CD14-positive monocyte (primary cell): ENCODE measurements at regions of chr14 and their contacts with region 1.

Region 1: GRCh38 chr14:103546652-103547454 is 15.6 kb downstream of the BAG5 start:
- DNase-seq: peak; percentile 44 to 60 (median 56)
- H3K4me3 ChIP-seq: no peak overlapping the region
- H3K4me3 Mint-ChIP-seq: no peak overlapping the region
- H3K27ac ChIP-seq: no peak overlapping the region
- H3K27ac Mint-ChIP-seq: no peak overlapping the region
- H3K4me1 ChIP-seq: no peaks in the 10 kb centered on the region
- H3K4me1 Mint-ChIP-seq: no peaks in the 10 kb centered on the region
- H3K27me3 ChIP-seq: no peaks in the 10 kb centered on the region
- H3K27me3 Mint-ChIP-seq: peaks cover 2 to 6% (median 2%) of the 10 kb centered on the region in 3 donors
- CTCF ChIP-seq: peak; percentile 99

Region 2: GRCh38 chr14:103500148-103500990 is 46.5 kb before region 1 on chr14:
- intact Hi-C with region 1: loop called (anchors 2 to 5 kb)
- DNase-seq: peak; percentile 41 to 68 (median 66)
- H3K4me3 ChIP-seq: no peak overlapping the region
- H3K4me3 Mint-ChIP-seq: no peak overlapping the region
- H3K27ac ChIP-seq: no peak overlapping the region
- H3K27ac Mint-ChIP-seq: no peak overlapping the region
- H3K4me1 ChIP-seq: no peaks in the 10 kb centered on the region
- H3K4me1 Mint-ChIP-seq: peaks cover 5% of the 10 kb centered on the region
- H3K27me3 ChIP-seq: no peaks in the 10 kb centered on the region
- H3K27me3 Mint-ChIP-seq: no peaks in the 10 kb centered on the region
- CTCF ChIP-seq: peak; percentile 87

Region 3: DNA sequence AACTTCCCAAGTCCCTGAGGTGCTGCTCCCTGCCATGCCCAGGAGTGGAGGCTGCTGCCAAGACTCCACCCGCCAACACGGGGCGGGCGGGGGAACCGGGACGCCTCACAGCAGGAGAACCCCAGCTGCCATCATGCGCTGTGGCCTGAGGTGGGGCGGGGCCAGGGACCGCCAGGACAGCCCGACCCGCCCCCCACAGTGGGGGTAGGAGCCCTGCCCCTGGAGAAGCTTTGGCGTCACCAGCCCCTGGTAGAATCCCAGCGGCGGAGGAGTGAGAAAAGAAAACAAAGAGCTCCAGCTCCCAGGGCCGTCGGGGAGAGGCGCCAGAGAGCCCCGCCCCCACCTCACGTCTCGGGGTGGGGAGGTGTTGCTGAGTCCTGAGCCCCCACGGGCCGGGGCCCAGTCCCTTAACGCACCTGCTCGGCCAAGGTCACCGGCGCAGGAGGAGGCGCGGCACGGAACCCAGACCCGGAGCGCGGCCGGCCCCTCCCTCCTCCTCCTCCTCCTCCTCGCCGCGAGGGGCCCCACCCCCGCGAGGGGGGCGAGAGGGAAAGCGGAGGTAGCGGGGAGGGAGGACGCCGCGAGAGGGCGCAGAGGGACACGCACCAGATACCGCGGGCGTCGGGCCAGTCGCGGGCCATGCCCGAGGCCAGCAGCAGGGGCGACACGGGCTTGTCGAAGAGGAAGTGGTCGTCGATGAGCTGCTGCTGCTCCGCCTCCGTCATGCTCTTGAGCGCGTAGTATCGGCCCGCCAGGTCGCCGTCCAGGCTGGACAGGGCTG is 26.0 kb before region 1 on chr14:
- intact Hi-C with region 1: loop called (anchors 1 kb)
- DNase-seq: peak; percentile 80 to 89 (median 84)
- H3K4me3 ChIP-seq: peak overlapping the region; percentile 32 to 69 (median 42)
- H3K4me3 Mint-ChIP-seq: peak overlapping the region; percentile 73 to 81
- H3K27ac ChIP-seq: no peak overlapping the region
- H3K27ac Mint-ChIP-seq: no peak overlapping the region
- H3K4me1 ChIP-seq: peaks cover 16 to 41% of the 10 kb centered on the region in 2 donors
- H3K4me1 Mint-ChIP-seq: peaks cover 18% of the 10 kb centered on the region
- H3K27me3 ChIP-seq: peaks cover 20 to 41% of the 10 kb centered on the region in 2 donors
- H3K27me3 Mint-ChIP-seq: peaks cover 42 to 54% (median 43%) of the 10 kb centered on the region in 3 donors
- CTCF ChIP-seq: peak; percentile 68

Region 4: DNA sequence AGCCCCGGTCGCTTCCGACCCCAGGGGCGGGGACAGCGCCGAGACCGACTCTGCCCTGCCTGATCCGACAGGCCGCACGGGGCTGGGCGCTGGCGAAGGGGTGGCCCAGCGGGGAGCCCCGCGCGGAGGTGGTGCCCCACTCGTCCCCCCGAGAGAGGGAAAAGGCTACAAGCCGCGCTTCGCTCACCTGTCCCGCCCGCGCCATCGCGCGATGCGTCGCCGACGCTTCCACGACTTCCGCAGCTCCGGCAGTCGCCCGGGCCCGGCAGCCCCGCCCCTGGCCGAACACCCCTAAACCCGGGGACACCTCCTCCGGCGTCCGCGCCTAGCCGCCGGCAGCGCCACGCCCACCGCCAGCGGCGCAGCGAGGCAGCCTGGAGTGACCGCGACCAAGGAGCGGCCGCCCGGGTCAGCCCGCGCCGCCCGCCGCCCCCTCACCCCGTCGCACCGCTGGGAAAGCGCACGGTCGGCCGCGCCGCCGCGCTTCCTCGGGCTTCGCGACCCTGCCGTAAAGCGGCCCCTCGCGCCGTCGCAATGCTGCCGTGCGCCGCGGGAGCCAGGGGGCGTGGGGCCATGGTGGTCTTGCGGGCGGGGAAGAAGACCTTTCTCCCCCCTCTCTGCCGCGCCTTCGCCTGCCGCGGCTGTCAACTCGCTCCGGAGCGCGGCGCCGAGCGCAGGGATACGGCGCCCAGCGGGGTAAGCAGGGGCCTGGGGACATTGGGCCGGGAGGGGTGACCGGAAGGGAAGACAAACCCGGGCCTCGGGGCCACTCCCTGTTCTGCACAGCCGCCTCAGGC is 15.8 kb after region 1 on chr14 and contains the starts of genes BAG5 and COA8:
- intact Hi-C with region 1: no loop called
- DNase-seq: peak; percentile 63 to 75 (median 71)
- H3K4me3 ChIP-seq: peak within 1 kb of the TSS; percentile 89 to 98 (median 92)
- H3K4me3 Mint-ChIP-seq: peak within 1 kb of the TSS; percentile 91 to 96
- H3K27ac ChIP-seq: peak within 1 kb of the TSS; percentile 68 to 88
- H3K27ac Mint-ChIP-seq: peak within 1 kb of the TSS; percentile 82 to 91 (median 88)
- H3K4me1 ChIP-seq: peaks cover 24 to 31% of the 10 kb centered on the region in 2 donors
- H3K4me1 Mint-ChIP-seq: peaks cover 36% of the 10 kb centered on the region
- H3K27me3 ChIP-seq: no peaks in the 10 kb centered on the region
- H3K27me3 Mint-ChIP-seq: no peaks in the 10 kb centered on the region
- CTCF ChIP-seq: no peak
- polyA plus RNA-seq, gene BAG5: 4.7 to 33.1 (median 30.1) TPM
- polyA plus RNA-seq, gene COA8: 13.2 to 58.1 (median 52.3) TPM